HEK293 (cell line): ENCODE measurements at regions of chr10 and their contacts with region 1.

Region 1: DNA sequence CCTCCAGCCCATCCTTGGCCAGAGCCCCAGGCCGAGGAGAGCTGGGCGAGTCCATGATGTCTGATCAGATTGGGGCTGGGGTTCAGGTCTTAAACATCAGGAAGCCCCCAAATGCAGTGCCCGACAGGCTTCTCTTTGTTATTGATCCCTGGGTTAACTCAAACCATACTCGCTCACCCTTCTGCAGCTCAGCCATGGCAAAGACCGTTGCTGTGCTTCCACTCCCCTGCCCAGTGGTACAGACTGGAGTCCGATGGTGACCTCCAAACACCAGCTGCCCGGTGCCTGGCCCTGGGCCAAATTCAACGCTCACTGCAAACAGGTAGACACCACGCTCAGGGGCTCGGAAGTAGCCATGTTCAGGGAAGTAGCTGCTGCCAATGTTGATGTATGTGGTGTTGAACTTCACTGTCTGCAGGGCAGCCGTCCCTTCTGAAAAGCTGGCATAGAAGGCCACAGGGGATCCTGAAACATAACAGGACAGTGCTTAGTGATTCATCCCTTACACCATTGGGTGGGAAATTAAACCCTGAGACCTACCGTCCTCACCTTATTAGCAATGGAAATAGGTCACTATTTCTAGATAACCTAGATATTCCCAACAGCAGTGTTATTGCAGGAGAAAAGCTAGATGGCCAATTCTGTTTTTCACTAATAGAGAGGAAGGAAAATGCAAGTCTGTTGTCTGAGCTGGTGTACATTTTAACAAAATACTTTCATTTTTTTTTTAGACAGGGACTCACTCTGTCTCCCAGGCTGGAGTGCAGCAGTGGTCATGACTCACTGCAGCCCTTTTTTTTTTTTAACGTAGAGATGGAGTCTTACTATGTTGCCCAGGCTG is 20.5 kb downstream of the MMRN2 start:
- H3K4me3 ChIP-seq: no peak overlapping the region
- H3K27ac ChIP-seq: no peak overlapping the region
- H3K4me1 ChIP-seq: no peaks in the 10 kb centered on the region
- CTCF ChIP-seq: no peak

Region 2: DNA sequence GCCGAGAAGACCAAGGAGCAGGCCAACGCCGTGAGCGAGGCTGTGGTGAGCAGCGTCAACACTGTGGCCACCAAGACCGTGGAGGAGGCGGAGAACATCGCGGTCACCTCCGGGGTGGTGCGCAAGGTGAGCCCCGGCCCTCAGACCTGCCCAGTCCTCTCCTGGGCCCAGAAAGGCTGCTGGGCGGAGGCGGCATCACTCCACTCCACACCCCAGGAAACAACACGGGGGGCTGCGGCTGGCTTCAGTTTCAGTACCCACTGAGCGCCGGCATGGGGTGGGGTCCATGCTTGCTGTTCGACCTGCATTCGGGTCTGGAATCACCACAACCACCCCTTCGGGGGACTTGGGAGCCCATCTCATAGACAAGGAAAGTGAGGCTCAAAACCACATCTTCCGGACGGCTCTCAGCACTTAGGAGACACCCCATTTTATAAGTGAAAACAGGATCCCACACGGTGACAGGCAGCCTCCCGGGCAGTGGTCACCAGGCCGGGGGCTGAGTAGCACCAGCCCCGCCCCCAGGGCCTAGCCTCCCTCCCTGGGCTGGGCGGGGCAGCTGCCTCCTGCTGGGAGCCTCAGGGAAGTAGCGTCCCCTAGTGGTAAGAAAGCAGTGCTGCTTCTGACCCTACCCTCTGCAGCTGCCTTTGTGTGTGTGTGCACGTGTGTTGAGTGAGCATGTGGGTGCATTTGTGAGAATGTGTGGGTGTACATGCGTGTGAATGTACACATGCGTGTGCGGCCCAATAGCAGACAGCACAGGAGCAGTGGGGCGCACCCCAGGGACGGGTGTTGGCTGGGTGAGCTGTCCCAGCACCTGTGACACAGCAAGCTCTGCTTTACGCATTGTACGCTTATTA is 23.4 kb after region 1 on chr10:
- CTCF ChIA-PET with region 1: interaction called, 23 read pairs
- POLR2A ChIA-PET with region 1: no interaction called
- H3K4me3 ChIP-seq: no peak overlapping the region
- H3K27ac ChIP-seq: no peak overlapping the region
- H3K4me1 ChIP-seq: no peaks in the 10 kb centered on the region
- CTCF ChIP-seq: peak; percentile 81

Region 3: GRCh38 chr10:86970162-86970981 is 33.5 kb after region 1 on chr10:
- CTCF ChIA-PET with region 1: interaction called, 23 read pairs
- POLR2A ChIA-PET with region 1: no interaction called
- H3K4me3 ChIP-seq: peak overlapping the region; percentile 42
- H3K27ac ChIP-seq: peak overlapping the region; percentile 62; the same call in 1 of the 2 replicates
- H3K4me1 ChIP-seq: peaks cover 2% of the 10 kb centered on the region; the same call in 1 of the 2 replicates
- CTCF ChIP-seq: no peak